Activated naive CD4-positive, alpha-beta T cell treated with anti-CD3 and anti-CD28 coated beads for 36 hours (primary cell): ENCODE measurements at regions of chr6 and their contacts with region 1.

Region 1: GRCh38 chr6:131532580-131533039 is 40.4 kb upstream of the ARG1 start:
- DNase-seq: peak; percentile 88
- H3K4me3 Mint-ChIP-seq: no peak overlapping the region
- H3K27ac Mint-ChIP-seq: peak overlapping the region; percentile 86
- H3K4me1 Mint-ChIP-seq: peaks cover 52% of the 10 kb centered on the region
- H3K27me3 Mint-ChIP-seq: no peaks in the 10 kb centered on the region

Region 2: DNA sequence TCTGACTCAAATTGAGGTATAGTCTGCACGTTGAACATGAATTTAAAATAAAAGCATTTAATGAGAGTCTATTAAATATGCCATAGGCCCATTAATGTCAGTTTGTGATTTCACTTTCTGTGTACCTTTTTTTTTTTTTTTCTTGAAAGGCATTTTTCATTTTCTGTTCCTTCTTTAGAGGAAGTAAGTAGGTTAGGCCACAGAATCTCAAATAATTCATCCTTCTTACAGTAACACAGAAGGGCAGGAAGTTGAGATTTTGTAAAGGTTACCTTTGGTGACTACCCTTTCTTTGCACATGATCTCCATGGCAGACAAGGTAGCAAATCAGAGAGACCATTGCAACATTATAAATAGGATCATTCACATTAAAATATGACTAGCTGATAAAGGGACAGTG is 1504.7 kb before region 1 on chr6:
- CTCF ChIA-PET with region 1: no interaction called
- intact Hi-C with region 1: loop called (anchors 2 kb)
- DNase-seq: no peak
- H3K4me3 Mint-ChIP-seq: no peak overlapping the region
- H3K27ac Mint-ChIP-seq: peak overlapping the region; percentile 14
- H3K4me1 Mint-ChIP-seq: peaks cover 49% of the 10 kb centered on the region
- H3K27me3 Mint-ChIP-seq: no peaks in the 10 kb centered on the region

Region 3: GRCh38 chr6:130885392-130886192 is 647.0 kb before region 1 on chr6:
- CTCF ChIA-PET with region 1: interaction called, 13 read pairs
- intact Hi-C with region 1: loop called (anchors 1 kb)
- DNase-seq: peak; percentile 86
- H3K4me3 Mint-ChIP-seq: no peak overlapping the region
- H3K27ac Mint-ChIP-seq: no peak overlapping the region
- H3K4me1 Mint-ChIP-seq: no peaks in the 10 kb centered on the region
- H3K27me3 Mint-ChIP-seq: no peaks in the 10 kb centered on the region

Region 4: DNA sequence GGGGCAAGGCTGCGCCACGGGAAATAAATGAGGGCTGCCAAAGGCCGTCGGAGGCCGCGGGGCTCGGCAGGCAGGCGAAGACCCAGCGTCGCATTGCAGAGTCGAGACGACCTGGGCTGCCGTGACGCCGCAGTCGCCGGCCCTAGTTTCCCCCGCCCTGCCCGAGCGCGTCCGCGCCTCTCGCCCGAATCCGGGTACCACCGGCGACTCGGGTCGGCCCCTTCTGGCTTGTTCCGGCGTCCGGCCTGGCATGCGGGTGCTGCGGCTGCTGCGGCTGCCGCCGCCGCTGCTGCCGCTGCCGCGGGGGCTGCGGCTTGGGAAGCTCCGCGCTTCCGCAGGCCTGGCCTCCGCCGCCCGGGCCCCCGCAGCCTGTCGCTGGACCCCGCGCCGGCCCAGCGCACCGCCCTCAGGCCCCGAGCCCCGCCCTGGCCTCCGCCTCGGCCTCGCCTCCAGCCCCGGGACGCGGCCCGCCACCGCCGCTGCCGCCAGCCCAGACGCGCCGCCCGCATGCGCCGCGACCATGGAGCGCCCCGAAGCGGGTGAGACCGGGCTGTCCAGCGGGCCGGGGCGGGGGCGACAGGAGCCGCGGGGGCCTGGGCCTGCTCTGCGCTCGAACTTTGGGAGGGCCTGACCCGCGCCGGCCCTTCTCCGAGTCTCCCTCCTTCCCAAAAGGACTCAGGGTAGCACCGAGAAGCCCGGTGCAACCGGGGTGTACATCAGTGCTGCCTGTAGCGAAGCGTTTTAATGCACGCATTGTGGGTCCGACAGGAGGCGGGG is 397.2 kb before region 1 on chr6 and contains the start of gene AKAP7:
- CTCF ChIA-PET with region 1: interaction called, 5 read pairs
- intact Hi-C with region 1: loop called (anchors 1 kb)
- DNase-seq: peak; percentile 67
- H3K4me3 Mint-ChIP-seq: peak within 1 kb of the TSS; percentile 85
- H3K27ac Mint-ChIP-seq: peak within 1 kb of the TSS; percentile 83
- H3K4me1 Mint-ChIP-seq: peaks cover 13% of the 10 kb centered on the region
- H3K27me3 Mint-ChIP-seq: no peaks in the 10 kb centered on the region
- total RNA-seq, gene AKAP7: 7.3 to 7.5 TPM

Region 5: DNA sequence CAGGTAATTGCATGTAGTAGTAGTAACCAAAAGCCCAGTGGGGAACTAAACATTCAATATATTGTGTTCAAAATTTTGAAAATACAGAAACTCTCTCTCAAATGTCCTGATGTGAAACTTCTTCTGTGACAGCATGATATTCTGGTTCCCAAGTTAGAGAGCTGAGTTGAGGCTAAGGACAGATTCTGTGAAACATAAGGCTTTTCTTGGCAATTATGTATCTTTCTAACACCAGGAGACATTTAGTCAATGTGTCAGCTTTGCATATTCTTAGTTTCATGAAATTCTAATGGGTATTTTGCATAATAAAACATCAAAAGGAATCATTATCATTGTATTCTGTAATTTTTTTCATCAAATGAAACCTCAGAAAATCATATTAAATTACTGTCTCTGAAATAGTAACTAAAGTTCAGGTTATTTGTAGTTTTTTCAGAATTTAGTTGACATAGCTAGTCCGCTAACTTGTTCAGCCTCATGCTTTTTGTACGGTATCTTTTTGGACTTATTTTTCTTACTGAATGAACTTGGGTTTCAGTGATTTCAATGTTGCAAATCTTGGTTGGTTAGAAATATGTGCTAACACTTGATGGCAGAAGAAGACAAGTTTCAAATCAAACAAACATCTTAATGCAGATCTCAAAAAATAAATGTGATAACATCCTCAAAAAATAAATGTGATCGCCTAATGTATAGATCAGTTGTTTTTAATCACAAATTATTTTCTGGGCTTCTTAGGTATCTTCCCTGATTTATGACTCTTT is 326.9 kb before region 1 on chr6:
- CTCF ChIA-PET with region 1: interaction called, 74 read pairs
- intact Hi-C with region 1: loop called (anchors 1 kb)
- DNase-seq: no peak
- H3K4me3 Mint-ChIP-seq: peak overlapping the region; percentile 0
- H3K27ac Mint-ChIP-seq: peak overlapping the region; percentile 36
- H3K4me1 Mint-ChIP-seq: peaks cover 58% of the 10 kb centered on the region
- H3K27me3 Mint-ChIP-seq: no peaks in the 10 kb centered on the region

Region 6: DNA sequence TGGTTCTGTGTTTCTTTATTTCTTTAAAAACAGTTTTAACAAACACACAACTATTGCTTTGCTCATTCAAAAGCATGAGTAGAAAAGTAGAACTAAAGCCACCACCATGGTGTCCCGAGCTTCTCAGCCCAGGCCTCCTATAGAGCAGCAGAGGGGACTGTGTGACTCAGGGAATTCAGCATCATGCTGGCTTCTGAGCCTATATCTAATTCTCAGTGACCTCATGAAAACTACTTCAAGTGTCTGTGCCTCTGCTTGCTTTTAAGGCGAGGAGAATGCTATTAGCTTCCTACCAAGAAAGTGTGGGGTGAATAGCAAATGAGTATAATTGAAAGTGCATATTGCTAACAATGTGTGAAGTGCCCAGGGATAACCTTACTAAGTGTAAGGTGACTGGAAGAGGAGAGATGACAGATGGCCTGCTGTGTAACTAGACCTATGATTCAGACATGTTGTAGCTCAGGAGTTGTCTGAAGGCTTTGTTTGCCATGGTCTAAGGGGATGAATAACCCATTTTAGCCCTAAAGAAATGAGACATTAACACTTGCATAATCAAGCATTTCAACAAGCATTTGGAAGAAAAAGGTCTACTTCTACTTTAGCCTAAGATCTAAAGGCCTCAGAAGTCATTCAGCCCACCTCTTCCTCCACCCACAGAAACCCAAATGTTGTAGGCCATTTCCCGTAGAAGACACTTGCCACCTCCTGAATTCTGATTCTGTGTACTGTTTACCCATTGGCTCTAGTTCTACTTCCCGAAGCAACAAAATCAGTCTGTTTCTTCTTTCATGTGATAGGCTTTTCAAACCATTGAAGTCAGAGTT is 81.1 kb before region 1 on chr6:
- CTCF ChIA-PET with region 1: interaction called, 4 read pairs
- intact Hi-C with region 1: loop called (anchors 1 kb)
- DNase-seq: peak; percentile 31
- H3K4me3 Mint-ChIP-seq: no peak overlapping the region
- H3K27ac Mint-ChIP-seq: peak overlapping the region; percentile 83
- H3K4me1 Mint-ChIP-seq: peaks cover 40% of the 10 kb centered on the region
- H3K27me3 Mint-ChIP-seq: no peaks in the 10 kb centered on the region